A673 (cell line): ENCODE measurements at regions of chr10 and their contacts with region 1.

Region 1: GRCh38 chr10:92993699-92994272 is 66.8 kb upstream of the CYP26C1 start:
- DNase-seq: peak; percentile 59
- H3K4me3 ChIP-seq: no peak overlapping the region
- H3K27ac ChIP-seq: no peak overlapping the region
- H3K4me1 ChIP-seq: peaks cover 17% of the 10 kb centered on the region
- H3K27me3 ChIP-seq: no peaks in the 10 kb centered on the region
- CTCF ChIP-seq: no peak

Region 2: DNA sequence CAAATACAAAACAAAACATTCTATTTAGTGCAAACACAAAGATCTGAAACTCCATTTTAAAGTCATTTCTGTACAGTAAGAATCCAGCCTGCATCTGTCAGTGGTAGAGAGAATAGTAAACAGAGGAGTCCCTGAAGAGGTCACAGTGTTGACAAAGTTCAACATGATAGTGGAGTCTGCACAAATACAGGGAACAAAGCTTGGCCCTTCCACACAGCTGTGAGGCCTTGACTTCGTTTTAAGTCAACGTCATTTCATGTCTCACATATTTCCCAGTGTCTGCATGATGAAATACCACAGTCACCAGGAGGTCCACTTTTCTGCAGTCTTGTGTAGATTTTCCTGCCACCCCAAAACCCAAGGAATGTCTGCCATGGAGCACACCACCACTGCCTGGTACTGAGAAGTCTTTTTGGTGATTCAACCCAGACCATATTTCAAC is 112.9 kb after region 1 on chr10:
- CTCF ChIA-PET with region 1: no interaction called
- POLR2A ChIA-PET with region 1: no interaction called
- intact Hi-C with region 1: no loop called
- DNase-seq: no peak
- H3K4me3 ChIP-seq: no peak overlapping the region
- H3K27ac ChIP-seq: no peak overlapping the region
- H3K4me1 ChIP-seq: no peaks in the 10 kb centered on the region
- H3K27me3 ChIP-seq: no peaks in the 10 kb centered on the region
- CTCF ChIP-seq: no peak

Region 3: GRCh38 chr10:93309062-93309461 is 315.3 kb after region 1 on chr10:
- CTCF ChIA-PET with region 1: interaction called, 11 read pairs
- POLR2A ChIA-PET with region 1: no interaction called
- intact Hi-C with region 1: no loop called
- DNase-seq: peak; percentile 10
- H3K4me3 ChIP-seq: no peak overlapping the region
- H3K27ac ChIP-seq: no peak overlapping the region
- H3K4me1 ChIP-seq: no peaks in the 10 kb centered on the region
- H3K27me3 ChIP-seq: no peaks in the 10 kb centered on the region
- CTCF ChIP-seq: no peak